H1 (cell line): ENCODE measurements at regions of chr14 and their contacts with region 1.

Region 1: GRCh38 chr14:67426983-67427606 is 15.1 kb upstream of the PLEK2 start:
- DNase-seq: peak; percentile 70 to 82
- H3K4me3 ChIP-seq: peak overlapping the region in 1 of 4 experiments; percentile 20; a peak in 1 of 8 replicates
- H3K27ac ChIP-seq: no peak overlapping the region
- H3K4me1 ChIP-seq: peaks cover 0 to 7% (median 2%) of the 10 kb centered on the region in 4 experiments; a peak in 3 of 7 replicates
- H3K27me3 ChIP-seq: no peaks in the 10 kb centered on the region
- CTCF ChIP-seq: peak; percentile 56 to 88 (median 87)
- EP300 ChIP-seq: no peak
- POLR2A ChIP-seq: no peak
- RAD21 ChIP-seq: peak; percentile 92 to 96

Region 2: GRCh38 chr14:67446120-67447032 is 19.3 kb after region 1 on chr14:
- CTCF ChIA-PET with region 1: interaction called, 115 read pairs
- POLR2A ChIA-PET with region 1: interaction called, 7 read pairs
- DNase-seq: no peak
- H3K4me3 ChIP-seq: no peak overlapping the region
- H3K27ac ChIP-seq: no peak overlapping the region
- H3K4me1 ChIP-seq: peaks cover 0 to 22% (median 10%) of the 10 kb centered on the region in 4 experiments; a peak in 6 of 7 replicates
- H3K27me3 ChIP-seq: no peaks in the 10 kb centered on the region; a peak in 1 of 7 replicates
- CTCF ChIP-seq: no peak
- EP300 ChIP-seq: no peak
- POLR2A ChIP-seq: no peak
- RAD21 ChIP-seq: no peak

Region 3: GRCh38 chr14:67479974-67480373 is 52.9 kb after region 1 on chr14:
- CTCF ChIA-PET with region 1: interaction called, 22 read pairs
- POLR2A ChIA-PET with region 1: no interaction called
- DNase-seq: no peak
- H3K4me3 ChIP-seq: no peak overlapping the region
- H3K27ac ChIP-seq: no peak overlapping the region
- H3K4me1 ChIP-seq: no peaks in the 10 kb centered on the region
- H3K27me3 ChIP-seq: no peaks in the 10 kb centered on the region
- CTCF ChIP-seq: no peak
- EP300 ChIP-seq: no peak
- POLR2A ChIP-seq: no peak
- RAD21 ChIP-seq: no peak

Region 4: DNA sequence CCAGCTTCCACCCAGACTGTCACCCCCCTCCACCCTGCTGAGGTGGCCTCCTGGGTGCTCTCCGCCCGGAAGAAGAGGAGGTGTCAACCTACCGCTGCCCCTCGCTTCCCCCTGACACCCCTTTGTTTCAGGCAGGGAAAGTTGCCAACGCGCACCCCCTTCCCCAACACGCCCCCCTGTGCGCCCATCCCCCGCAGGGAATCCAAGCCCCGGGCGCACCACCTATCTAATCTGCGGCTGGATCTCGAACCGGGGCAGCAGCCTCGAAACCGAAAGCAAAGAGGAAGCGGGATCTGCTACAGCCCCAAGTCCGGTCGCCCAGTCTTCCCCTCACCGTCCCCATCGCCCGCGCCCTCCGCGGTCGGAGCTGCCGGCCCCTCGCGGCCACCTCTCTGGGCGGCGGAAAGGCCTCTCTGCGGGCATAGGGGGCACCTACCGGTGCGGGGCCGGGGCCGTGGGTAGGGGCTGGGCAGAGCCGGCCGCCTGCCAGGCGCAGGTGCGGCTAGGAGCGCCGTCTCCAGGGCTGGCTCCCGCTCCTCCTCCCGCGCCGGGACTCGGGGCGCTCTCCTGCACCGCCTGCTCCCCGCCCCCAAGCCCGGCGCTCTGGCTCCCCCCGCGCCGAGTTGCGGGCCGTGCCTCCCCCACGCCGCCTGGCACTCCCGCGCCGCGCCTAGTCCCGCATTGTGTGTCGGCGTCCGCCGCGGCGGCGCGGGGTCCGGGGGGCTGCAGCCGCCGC is 87.7 kb after region 1 on chr14:
- CTCF ChIA-PET with region 1: interaction called, 100 read pairs
- POLR2A ChIA-PET with region 1: interaction called, 3 read pairs
- DNase-seq: peak in 1 of 2 experiments; percentile 77
- H3K4me3 ChIP-seq: peak overlapping the region; percentile 42 to 85 (median 46)
- H3K27ac ChIP-seq: no peak overlapping the region
- H3K4me1 ChIP-seq: peaks cover 2 to 8% (median 3%) of the 10 kb centered on the region in 4 experiments; a peak in 4 of 7 replicates
- H3K27me3 ChIP-seq: peaks cover 7 to 49% (median 32%) of the 10 kb centered on the region in 4 experiments
- CTCF ChIP-seq: no peak
- EP300 ChIP-seq: no peak
- POLR2A ChIP-seq: no peak
- RAD21 ChIP-seq: no peak

Region 5: DNA sequence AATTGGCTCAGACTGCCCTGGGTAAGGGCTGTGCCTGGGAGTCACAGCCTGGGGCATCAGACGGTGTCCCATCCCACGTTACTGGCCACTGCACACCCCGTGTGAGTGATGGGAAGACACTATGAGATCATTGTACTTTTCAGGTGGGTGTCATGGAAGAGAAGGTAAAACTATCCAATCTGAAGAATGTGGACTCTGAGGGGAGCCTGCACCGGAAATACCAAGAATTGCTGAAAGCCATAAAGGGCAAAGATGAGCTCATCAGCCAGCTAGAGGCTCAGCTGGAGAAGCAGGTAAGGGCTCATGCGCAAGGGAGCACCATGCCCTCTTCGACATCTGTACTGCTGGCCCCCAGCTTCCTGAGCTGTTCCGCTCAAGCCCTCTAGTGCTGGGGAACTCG is 130.0 kb after region 1 on chr14:
- CTCF ChIA-PET with region 1: interaction called, 446 read pairs
- POLR2A ChIA-PET with region 1: interaction called, 3 read pairs
- DNase-seq: no peak
- H3K4me3 ChIP-seq: no peak overlapping the region
- H3K27ac ChIP-seq: no peak overlapping the region
- H3K4me1 ChIP-seq: peaks cover 0 to 3% (median under 1%) of the 10 kb centered on the region in 4 experiments; a peak in 2 of 7 replicates
- H3K27me3 ChIP-seq: no peaks in the 10 kb centered on the region
- CTCF ChIP-seq: no peak
- EP300 ChIP-seq: no peak
- POLR2A ChIP-seq: no peak
- RAD21 ChIP-seq: no peak

Region 6: GRCh38 chr14:67599698-67600561 is 172.8 kb after region 1 on chr14 and contains the start of gene PIGH:
- CTCF ChIA-PET with region 1: interaction called, 12 read pairs
- POLR2A ChIA-PET with region 1: no interaction called
- DNase-seq: peak; percentile 46 to 95
- H3K4me3 ChIP-seq: peak within 1 kb of the TSS; percentile 60 to 79 (median 70)
- H3K27ac ChIP-seq: no peak within 1 kb of the TSS
- H3K4me1 ChIP-seq: no peaks in the 10 kb centered on the region; a peak in 1 of 7 replicates
- H3K27me3 ChIP-seq: peaks cover 4 to 41% (median 22%) of the 10 kb centered on the region in 4 experiments
- CTCF ChIP-seq: peak; percentile 53 to 97 (median 66)
- EP300 ChIP-seq: no peak
- POLR2A ChIP-seq: peak in 1 of 2 experiments; percentile 59; a peak in 2 of 3 replicates
- RAD21 ChIP-seq: peak; percentile 37 to 51; a peak in 3 of 4 replicates
- total RNA-seq, gene PIGH: 6.2 and 7.2 TPM in 2 replicates